ENCODE measurements at regions of chr7 and their contacts with region 1.

Region 1: DNA sequence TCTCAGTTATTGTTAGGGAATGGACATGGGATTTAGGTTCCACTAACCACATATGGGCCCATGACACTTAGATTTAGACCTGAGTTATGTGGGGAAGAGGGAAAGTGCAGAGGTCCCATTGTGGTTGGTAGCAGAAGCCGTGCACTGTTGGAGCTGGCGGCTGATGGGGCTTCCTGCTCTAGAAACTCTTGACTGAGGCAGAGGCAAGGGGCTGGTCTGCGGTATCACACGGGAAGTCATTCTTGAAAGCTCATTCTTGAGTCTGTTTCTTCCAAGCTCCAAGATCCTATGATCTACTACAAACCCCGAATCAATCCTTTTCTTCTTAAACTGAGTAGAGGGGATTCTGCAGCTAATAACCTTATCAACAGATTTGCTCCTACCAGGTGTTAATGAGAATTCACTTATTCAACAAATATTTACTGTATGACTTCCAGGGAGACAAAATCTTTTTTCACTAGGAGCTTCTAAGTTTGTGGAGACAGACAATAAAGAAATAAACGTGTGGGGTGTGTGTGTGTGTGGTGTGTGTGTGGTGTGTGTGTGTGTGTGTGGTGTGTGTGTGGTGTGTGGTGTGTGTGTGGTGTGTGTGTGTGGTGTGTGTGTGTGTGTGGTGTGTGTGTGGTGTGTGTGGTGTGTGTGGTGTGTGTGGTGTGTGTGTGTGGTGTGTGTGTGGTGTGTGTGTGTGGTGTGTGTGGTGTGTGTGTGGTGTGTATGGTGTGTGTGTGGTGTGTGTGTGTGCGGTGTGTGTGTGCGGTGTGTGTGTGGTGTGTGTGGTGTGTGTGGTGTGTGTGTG is 57.1 kb downstream of the AOC1 start:
- DNase-seq: peak in 12 of 14 experiments; percentile 12 to 70 (median 42)
- ATAC-seq: peak; percentile 96
- H3K4me3 ChIP-seq: no peak overlapping the region
- H3K4me3 Mint-ChIP-seq: no peak overlapping the region
- H3K27ac ChIP-seq: no peak overlapping the region
- H3K27ac Mint-ChIP-seq: no peak overlapping the region
- H3K4me1 ChIP-seq: peaks cover 15% of the 10 kb centered on the region
- H3K4me1 Mint-ChIP-seq: peaks cover 18% of the 10 kb centered on the region
- H3K27me3 ChIP-seq: no peaks in the 10 kb centered on the region
- H3K27me3 Mint-ChIP-seq: peaks cover 8% of the 10 kb centered on the region
- CTCF ChIP-seq: no peak

Region 2: GRCh38 chr7:150787321-150788281 is 121.8 kb before region 1 on chr7:
- CTCF ChIA-PET with region 1: no interaction called
- POLR2A ChIA-PET with region 1: no interaction called
- intact Hi-C with region 1: no loop called
- DNase-seq: peak in 3 of 14 experiments; percentile 16 to 56 (median 51)
- ATAC-seq: no peak
- H3K4me3 ChIP-seq: no peak overlapping the region
- H3K4me3 Mint-ChIP-seq: no peak overlapping the region
- H3K27ac ChIP-seq: no peak overlapping the region
- H3K27ac Mint-ChIP-seq: no peak overlapping the region
- H3K4me1 ChIP-seq: no peaks in the 10 kb centered on the region
- H3K4me1 Mint-ChIP-seq: no peaks in the 10 kb centered on the region
- H3K27me3 ChIP-seq: peaks cover 0 to 3% of the 10 kb centered on the region in 2 experiments
- H3K27me3 Mint-ChIP-seq: peaks cover 13% of the 10 kb centered on the region
- CTCF ChIP-seq: no peak

Region 3: GRCh38 chr7:150838970-150839650 is 70.3 kb before region 1 on chr7:
- CTCF ChIA-PET with region 1: no interaction called
- POLR2A ChIA-PET with region 1: no interaction called
- intact Hi-C with region 1: no loop called
- DNase-seq: no peak
- ATAC-seq: no peak
- H3K4me3 ChIP-seq: no peak overlapping the region
- H3K4me3 Mint-ChIP-seq: no peak overlapping the region
- H3K27ac ChIP-seq: no peak overlapping the region
- H3K27ac Mint-ChIP-seq: no peak overlapping the region
- H3K4me1 ChIP-seq: no peaks in the 10 kb centered on the region
- H3K4me1 Mint-ChIP-seq: no peaks in the 10 kb centered on the region
- H3K27me3 ChIP-seq: peaks cover 0 to 1% of the 10 kb centered on the region in 2 experiments
- H3K27me3 Mint-ChIP-seq: peaks cover 7% of the 10 kb centered on the region
- CTCF ChIP-seq: no peak

Region 4: DNA sequence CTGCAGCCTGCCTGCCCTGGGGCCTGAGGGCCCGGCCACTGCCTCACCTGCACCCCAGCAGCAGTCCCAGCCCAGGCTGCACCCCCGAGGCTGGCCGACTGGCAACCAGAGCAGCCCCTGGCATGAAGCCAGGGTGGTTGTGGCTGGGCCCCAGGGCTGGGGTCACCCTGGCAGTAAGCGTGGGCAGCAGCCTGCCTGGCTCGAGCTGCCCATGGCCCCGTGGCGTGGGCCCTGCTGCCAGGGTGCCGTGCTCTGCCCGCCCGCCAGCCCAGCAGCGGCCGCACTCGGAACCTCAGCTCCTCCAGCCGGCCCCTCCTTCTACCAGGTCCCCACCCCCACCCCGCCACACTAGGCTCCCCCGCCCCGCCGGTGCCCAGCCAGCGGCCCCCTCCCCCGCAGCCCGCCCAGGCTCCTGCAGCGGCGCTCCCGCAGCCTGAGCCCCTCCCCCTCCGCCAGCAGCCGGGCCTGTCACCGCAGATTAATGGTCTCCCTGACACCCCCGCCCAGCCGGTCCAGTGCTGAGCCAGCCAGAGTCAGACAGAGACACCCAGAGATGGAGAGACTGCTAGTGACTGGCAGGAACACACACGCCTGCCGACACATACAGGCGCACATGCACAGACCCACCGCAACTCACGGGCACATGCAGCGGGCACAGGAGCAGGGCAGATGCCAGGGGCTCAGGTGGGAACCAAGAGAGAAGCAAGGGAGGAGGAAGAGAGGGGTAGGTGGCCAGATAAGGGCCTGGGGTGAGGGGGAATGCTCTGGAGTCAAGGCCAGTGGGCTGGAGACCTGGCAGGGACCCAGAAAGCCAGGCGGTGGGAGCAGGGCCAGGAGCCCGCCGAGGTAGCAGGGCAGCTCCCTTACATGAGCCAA is 46.4 kb after region 1 on chr7:
- CTCF ChIA-PET with region 1: no interaction called
- POLR2A ChIA-PET with region 1: no interaction called
- intact Hi-C with region 1: loop called in 1 of 2 experiments (anchors 5 kb)
- DNase-seq: no peak
- ATAC-seq: no peak
- H3K4me3 ChIP-seq: no peak overlapping the region
- H3K4me3 Mint-ChIP-seq: no peak overlapping the region
- H3K27ac ChIP-seq: no peak overlapping the region
- H3K27ac Mint-ChIP-seq: no peak overlapping the region
- H3K4me1 ChIP-seq: peaks cover 6% of the 10 kb centered on the region
- H3K4me1 Mint-ChIP-seq: peaks cover 23% of the 10 kb centered on the region
- H3K27me3 ChIP-seq: peaks cover 27 to 33% of the 10 kb centered on the region in 2 experiments
- H3K27me3 Mint-ChIP-seq: peaks cover 48% of the 10 kb centered on the region
- CTCF ChIP-seq: no peak

Region 5: DNA sequence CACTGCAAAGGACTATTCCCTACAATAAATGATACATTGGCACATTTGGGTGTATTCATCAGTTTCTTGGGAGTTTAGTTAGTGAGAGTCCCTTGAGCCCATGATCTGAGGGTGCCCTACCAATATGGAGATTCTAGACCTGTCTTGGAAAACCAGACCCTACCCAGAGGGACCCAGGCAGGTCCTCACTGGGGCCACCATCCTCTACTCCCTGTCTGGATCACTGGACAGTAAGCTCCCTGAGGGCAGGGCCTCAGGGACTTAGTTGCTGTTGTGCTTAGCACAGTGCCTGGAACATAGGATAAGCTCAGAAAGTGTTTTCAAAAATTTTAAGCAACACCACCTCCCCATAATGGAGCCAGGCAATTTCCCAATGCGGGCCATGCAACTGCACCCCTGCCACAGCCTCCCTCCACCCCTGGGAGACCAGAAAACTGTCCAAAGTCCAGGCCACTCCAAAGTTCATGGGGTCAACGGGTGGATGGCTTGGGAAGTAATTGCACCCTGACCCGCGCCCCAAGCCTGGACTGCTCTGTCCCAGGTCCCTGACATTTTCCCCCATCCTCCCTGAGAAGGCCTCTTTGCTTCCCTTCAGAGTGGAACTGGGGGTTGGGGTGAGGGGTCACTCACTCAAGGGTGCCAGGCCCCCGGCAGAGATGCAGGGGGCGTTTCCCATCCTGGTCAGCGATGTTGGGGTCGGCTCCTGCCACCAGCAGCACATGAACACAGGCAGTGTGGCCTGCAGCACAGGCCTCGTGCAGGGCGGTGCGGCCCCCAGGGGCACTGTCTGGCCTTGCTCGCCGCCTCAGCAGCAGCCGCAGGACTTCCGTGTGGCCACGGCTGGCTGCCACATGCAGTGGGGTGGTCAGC is 276.6 kb after region 1 on chr7:
- CTCF ChIA-PET with region 1: no interaction called
- POLR2A ChIA-PET with region 1: no interaction called
- intact Hi-C with region 1: no loop called
- DNase-seq: no peak
- ATAC-seq: no peak
- H3K4me3 ChIP-seq: no peak overlapping the region
- H3K4me3 Mint-ChIP-seq: no peak overlapping the region
- H3K27ac ChIP-seq: no peak overlapping the region
- H3K27ac Mint-ChIP-seq: no peak overlapping the region
- H3K4me1 ChIP-seq: no peaks in the 10 kb centered on the region
- H3K4me1 Mint-ChIP-seq: no peaks in the 10 kb centered on the region
- H3K27me3 ChIP-seq: no peaks in the 10 kb centered on the region
- H3K27me3 Mint-ChIP-seq: no peaks in the 10 kb centered on the region
- CTCF ChIP-seq: no peak

Measured in CD4-positive, alpha-beta T cell (primary cell).